CD4-positive, alpha-beta memory T cell (primary cell): ENCODE measurements at regions of chr17 and their contacts with region 1.

Region 1: GRCh38 chr17:49788478-49789242 is at the start of gene KAT7:
- DNase-seq: peak; percentile 98 to 99 (median 99)
- H3K4me3 ChIP-seq: peak within 1 kb of the TSS; percentile 92 to 96
- H3K4me3 Mint-ChIP-seq: peak within 1 kb of the TSS; percentile 93 to 99 (median 96)
- H3K27ac ChIP-seq: peak within 1 kb of the TSS; percentile 99
- H3K27ac Mint-ChIP-seq: peak within 1 kb of the TSS; percentile 91 to 100 (median 98)
- H3K4me1 ChIP-seq: peaks cover 54% of the 10 kb centered on the region
- H3K4me1 Mint-ChIP-seq: peaks cover 38 to 65% (median 53%) of the 10 kb centered on the region in 4 donors
- H3K27me3 ChIP-seq: no peaks in the 10 kb centered on the region
- H3K27me3 Mint-ChIP-seq: no peaks in the 10 kb centered on the region
- total RNA-seq, gene KAT7: 115 to 120 TPM

Region 2: GRCh38 chr17:49414622-49415350 is 373.9 kb before region 1 on chr17 and contains the start of gene PHB1:
- CTCF ChIA-PET with region 1: no interaction called
- POLR2A ChIA-PET with region 1: no interaction called
- intact Hi-C with region 1: loop called (anchors 1 kb)
- DNase-seq: peak; percentile 93 to 99 (median 94)
- H3K4me3 ChIP-seq: peak within 1 kb of the TSS; percentile 81 to 89
- H3K4me3 Mint-ChIP-seq: peak within 1 kb of the TSS; percentile 97 to 99 (median 98)
- H3K27ac ChIP-seq: peak within 1 kb of the TSS; percentile 65
- H3K27ac Mint-ChIP-seq: peak within 1 kb of the TSS; percentile 78 to 99 (median 96)
- H3K4me1 ChIP-seq: peaks cover 18% of the 10 kb centered on the region
- H3K4me1 Mint-ChIP-seq: peaks cover 14 to 27% (median 20%) of the 10 kb centered on the region in 4 donors
- H3K27me3 ChIP-seq: no peaks in the 10 kb centered on the region
- H3K27me3 Mint-ChIP-seq: no peaks in the 10 kb centered on the region
- total RNA-seq, gene PHB1: 62.0 to 64.2 TPM

Region 3: DNA sequence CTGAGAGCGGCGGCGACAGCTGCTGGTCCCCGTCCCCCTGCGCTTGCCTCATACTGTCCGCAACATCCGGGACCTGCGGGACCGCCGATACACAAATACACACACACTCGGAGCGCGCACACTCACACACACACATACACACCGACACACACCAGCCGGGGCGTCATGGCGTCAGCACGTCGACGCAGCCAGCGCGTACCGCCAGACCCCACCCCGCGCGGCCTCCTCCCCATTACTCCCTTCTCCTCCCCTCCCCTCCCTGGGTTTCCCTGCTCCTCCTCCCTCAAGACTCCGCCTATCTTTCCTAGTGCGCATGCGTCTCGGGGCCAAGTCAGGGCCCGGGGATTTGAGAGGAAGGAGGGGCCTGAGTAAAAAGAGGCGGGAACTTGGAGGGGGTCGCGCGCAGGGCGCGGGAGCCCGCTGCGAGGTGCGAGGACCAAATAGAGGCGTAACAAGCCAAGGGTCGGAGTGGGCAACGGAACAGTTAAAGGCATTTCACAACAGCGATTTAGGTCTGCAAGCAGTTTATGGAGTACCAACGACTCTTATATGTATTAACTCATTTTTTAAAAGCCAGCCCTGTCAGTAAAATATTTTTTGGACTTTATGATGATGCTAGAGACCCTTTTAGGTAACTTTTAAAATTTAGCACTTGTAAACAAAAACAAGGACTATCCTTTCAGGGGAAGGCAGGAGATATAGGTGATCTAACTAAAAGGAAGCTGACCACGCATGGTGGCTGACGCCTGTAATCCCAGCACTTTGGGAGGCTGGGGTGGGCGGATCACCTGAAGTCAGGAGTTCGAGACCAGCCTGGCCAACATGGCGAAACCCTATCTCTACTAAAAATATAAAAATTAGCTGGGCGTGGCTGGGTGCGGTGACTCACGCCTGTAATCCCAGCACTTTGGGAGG is 110.5 kb before region 1 on chr17 and contains the start of gene SPOP:
- CTCF ChIA-PET with region 1: no interaction called
- POLR2A ChIA-PET with region 1: interaction called, 9 read pairs
- intact Hi-C with region 1: loop called (anchors 1 kb)
- DNase-seq: peak; percentile 99 to 100 (median 100)
- H3K4me3 ChIP-seq: peak within 1 kb of the TSS; percentile 95 to 100
- H3K4me3 Mint-ChIP-seq: peak within 1 kb of the TSS; percentile 91 to 99 (median 94)
- H3K27ac ChIP-seq: peak within 1 kb of the TSS; percentile 94
- H3K27ac Mint-ChIP-seq: peak within 1 kb of the TSS; percentile 93 to 99 (median 98)
- H3K4me1 ChIP-seq: peaks cover 42% of the 10 kb centered on the region
- H3K4me1 Mint-ChIP-seq: peaks cover 35 to 52% (median 42%) of the 10 kb centered on the region in 4 donors
- H3K27me3 ChIP-seq: no peaks in the 10 kb centered on the region
- H3K27me3 Mint-ChIP-seq: peaks cover 0 to 1% of the 10 kb centered on the region in 2 donors
- total RNA-seq, gene SPOP: 83.1 to 86.1 TPM

Region 4: DNA sequence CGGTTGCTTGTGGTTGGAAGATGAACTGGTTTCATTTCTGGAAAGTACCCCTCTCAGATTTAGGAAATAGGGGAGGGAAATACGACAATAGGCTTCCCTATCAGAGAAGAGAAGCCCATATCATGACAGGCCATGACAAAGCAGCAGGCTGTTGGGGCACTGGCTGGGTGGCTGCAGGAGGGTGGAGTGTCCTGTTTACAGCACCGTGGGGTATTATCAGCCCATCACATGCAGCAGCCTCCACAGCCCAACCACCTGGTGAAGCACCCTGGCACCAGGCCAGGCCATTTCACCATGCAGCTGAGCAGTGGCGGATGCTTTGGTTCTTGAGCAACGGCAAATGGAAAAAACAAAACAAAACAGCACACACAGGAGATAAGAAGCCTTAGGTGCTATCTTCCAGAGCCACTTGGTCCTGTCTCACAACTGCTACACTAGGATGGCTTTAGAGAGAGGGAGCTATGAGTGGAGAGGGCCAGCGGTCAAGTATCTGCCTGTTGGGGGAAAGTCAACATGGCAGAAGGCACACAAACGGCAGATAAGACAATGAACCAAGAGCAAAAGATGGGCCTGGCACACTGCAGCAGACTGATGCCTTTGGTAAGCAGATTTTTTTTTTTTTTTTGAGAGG is 48.9 kb before region 1 on chr17:
- CTCF ChIA-PET with region 1: no interaction called
- POLR2A ChIA-PET with region 1: interaction called, 75 read pairs
- intact Hi-C with region 1: loop called (anchors 1 kb)
- DNase-seq: peak; percentile 96 to 100 (median 99)
- H3K4me3 ChIP-seq: peak overlapping the region; percentile 32 to 80
- H3K4me3 Mint-ChIP-seq: peak overlapping the region; percentile 93 to 99 (median 97)
- H3K27ac ChIP-seq: peak overlapping the region; percentile 99
- H3K27ac Mint-ChIP-seq: peak overlapping the region; percentile 99 to 100 (median 100)
- H3K4me1 ChIP-seq: peaks cover 97% of the 10 kb centered on the region
- H3K4me1 Mint-ChIP-seq: peaks cover 68 to 94% (median 78%) of the 10 kb centered on the region in 4 donors
- H3K27me3 ChIP-seq: no peaks in the 10 kb centered on the region
- H3K27me3 Mint-ChIP-seq: no peaks in the 10 kb centered on the region

Region 5: DNA sequence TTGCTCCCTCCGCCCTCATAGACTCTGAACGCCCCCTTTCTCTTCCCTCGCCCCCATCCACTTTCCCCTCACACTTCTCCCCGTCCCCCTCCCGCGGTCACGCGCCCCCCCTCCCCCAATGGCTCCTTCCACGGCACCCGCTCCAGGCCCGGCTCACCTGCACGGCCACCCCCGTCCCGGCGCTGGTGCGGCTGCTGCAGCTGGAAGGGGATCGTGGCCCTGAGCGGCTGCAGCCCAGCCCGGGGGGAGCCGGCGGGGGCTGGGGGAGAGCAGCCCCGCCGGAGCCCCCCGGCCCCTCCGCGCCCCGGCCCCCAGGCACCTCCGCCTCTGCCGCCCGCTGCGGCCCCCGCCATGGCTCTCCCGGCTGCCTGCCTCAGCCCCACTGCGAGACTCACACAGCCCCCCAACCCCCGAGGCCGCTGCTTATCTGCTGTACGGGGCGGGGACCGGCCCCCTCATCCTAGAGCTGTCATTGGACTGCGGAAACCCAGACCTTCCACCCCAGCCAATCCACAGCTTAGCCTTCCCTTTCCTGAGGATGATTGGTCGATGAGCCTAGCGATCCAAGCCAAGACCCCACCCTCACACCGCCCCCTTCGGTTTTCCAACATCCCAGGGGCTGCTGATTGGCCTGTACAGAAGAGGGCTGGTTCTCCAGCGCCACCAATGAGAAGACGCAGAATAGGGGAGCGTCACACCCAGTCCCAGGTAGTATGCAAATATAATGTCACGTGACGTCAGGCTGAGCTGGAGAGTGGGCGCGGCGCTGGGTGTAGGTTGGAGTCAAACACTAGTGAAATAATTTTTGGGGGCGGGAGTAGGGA is 24.7 kb before region 1 on chr17 and contains the start of gene FAM117A:
- CTCF ChIA-PET with region 1: interaction called, 4 read pairs
- POLR2A ChIA-PET with region 1: interaction called, 67 read pairs
- intact Hi-C with region 1: loop called (anchors 1 kb)
- DNase-seq: peak; percentile 97 to 100 (median 98)
- H3K4me3 ChIP-seq: peak within 1 kb of the TSS; percentile 38 to 70
- H3K4me3 Mint-ChIP-seq: peak within 1 kb of the TSS; percentile 92 to 98 (median 96)
- H3K27ac ChIP-seq: peak within 1 kb of the TSS; percentile 71
- H3K27ac Mint-ChIP-seq: peak within 1 kb of the TSS; percentile 89 to 98 (median 94)
- H3K4me1 ChIP-seq: peaks cover 46% of the 10 kb centered on the region
- H3K4me1 Mint-ChIP-seq: peaks cover 40 to 60% (median 45%) of the 10 kb centered on the region in 4 donors
- H3K27me3 ChIP-seq: no peaks in the 10 kb centered on the region
- H3K27me3 Mint-ChIP-seq: no peaks in the 10 kb centered on the region
- total RNA-seq, gene FAM117A: 95.1 to 102 TPM

Region 6: GRCh38 chr17:49851387-49852291 is 63.0 kb after region 1 on chr17:
- CTCF ChIA-PET with region 1: interaction called, 7 read pairs
- POLR2A ChIA-PET with region 1: interaction called, 16 read pairs
- intact Hi-C with region 1: loop called (anchors 1 kb)
- DNase-seq: peak; percentile 66 to 79 (median 69)
- H3K4me3 ChIP-seq: peak overlapping the region; percentile 60 to 87
- H3K4me3 Mint-ChIP-seq: peak overlapping the region; percentile 88 to 95 (median 92)
- H3K27ac ChIP-seq: peak overlapping the region; percentile 54
- H3K27ac Mint-ChIP-seq: peak overlapping the region; percentile 89 to 98 (median 95)
- H3K4me1 ChIP-seq: peaks cover 16% of the 10 kb centered on the region
- H3K4me1 Mint-ChIP-seq: peaks cover 12 to 31% (median 20%) of the 10 kb centered on the region in 4 donors
- H3K27me3 ChIP-seq: no peaks in the 10 kb centered on the region
- H3K27me3 Mint-ChIP-seq: peaks cover 0 to 2% of the 10 kb centered on the region in 2 donors

Region 7: GRCh38 chr17:49866019-49866380 is 77.3 kb after region 1 on chr17:
- CTCF ChIA-PET with region 1: no interaction called
- POLR2A ChIA-PET with region 1: no interaction called
- intact Hi-C with region 1: no loop called
- DNase-seq: no peak
- H3K4me3 ChIP-seq: no peak overlapping the region
- H3K4me3 Mint-ChIP-seq: no peak overlapping the region
- H3K27ac ChIP-seq: no peak overlapping the region
- H3K27ac Mint-ChIP-seq: no peak overlapping the region
- H3K4me1 ChIP-seq: no peaks in the 10 kb centered on the region
- H3K4me1 Mint-ChIP-seq: peaks cover 0 to 4% (median 1%) of the 10 kb centered on the region in 4 donors
- H3K27me3 ChIP-seq: no peaks in the 10 kb centered on the region
- H3K27me3 Mint-ChIP-seq: peaks cover 3 to 5% of the 10 kb centered on the region in 2 donors